ENCODE measurements at regions of chr3 and their contacts with region 1.

Region 1: DNA sequence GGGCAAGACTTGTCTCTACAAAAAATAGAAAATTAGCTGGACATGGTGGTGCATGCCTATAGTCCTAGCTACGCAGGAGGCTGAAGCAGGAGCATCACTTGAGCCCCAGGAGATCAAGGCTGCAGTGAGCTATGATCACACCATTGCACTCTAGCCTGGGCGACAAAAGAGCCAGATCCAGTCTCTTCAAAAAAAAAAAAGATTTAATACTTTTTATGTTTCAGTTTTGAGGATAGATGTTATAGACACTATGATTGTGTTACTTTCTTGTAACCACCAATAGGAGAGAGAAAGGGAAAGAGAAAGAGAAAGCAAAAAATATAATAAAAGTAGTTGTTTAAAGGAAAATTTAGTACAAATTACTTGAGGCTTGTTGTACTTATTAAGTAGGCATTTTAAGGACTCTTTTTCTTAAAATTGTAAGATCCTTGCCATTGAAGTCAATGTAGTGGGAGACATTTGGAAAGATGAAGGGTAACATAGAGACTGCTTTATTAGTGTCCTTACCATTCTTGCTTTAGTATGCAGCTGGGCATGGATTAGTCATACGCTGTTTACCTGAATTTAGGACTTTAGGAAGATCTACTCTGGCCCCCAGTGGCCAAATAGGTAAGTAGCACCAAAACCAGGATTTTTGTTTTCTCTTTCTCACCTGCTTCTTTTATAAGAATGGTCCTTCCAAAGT is 35.1 kb upstream of the ZDHHC23 start:
- DNase-seq: peak; percentile 68
- ATAC-seq: peak; percentile 93
- H3K4me3 ChIP-seq: no peak overlapping the region
- H3K27ac ChIP-seq: no peak overlapping the region
- H3K4me1 ChIP-seq: peaks cover 0 to 4% of the 10 kb centered on the region in 2 experiments; a peak in 1 of 4 replicates
- H3K27me3 ChIP-seq: no peaks in the 10 kb centered on the region
- CTCF ChIP-seq: peak; percentile 73 to 88 (median 77)
- POLR2A ChIP-seq: no peak
- RAD21 ChIP-seq: peak; percentile 92

Region 2: GRCh38 chr3:112671930-112672715 is 1240.6 kb before region 1 on chr3:
- CTCF ChIA-PET with region 1: no interaction called
- POLR2A ChIA-PET with region 1: no interaction called
- RAD21 ChIA-PET with region 1: no interaction called
- intact Hi-C with region 1: no loop called
- DNase-seq: no peak
- ATAC-seq: no peak
- H3K4me3 ChIP-seq: no peak overlapping the region
- H3K27ac ChIP-seq: no peak overlapping the region
- H3K4me1 ChIP-seq: peaks cover 6 to 28% of the 10 kb centered on the region in 2 experiments; a peak in 3 of 4 replicates
- H3K27me3 ChIP-seq: no peaks in the 10 kb centered on the region
- CTCF ChIP-seq: no peak
- POLR2A ChIP-seq: no peak
- RAD21 ChIP-seq: no peak

Region 3: DNA sequence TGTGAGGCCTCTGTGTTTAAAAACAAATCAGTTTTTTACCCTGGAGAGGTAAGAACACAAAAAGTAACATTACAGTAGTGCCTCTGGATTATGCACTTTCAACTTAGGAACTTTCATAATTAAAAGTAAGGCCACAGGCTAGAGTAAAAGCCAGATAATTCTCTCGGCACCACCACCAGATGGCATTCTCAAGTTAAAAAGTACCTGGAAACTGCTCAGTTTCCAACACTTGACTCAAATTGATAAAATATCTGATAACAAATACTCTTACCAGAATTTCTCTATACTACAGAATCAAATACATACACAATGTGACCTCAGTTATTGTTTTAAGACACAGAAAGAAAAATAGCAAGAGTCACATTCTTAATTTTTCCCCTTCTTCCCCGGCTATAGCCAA is 417.7 kb before region 1 on chr3:
- CTCF ChIA-PET with region 1: no interaction called
- POLR2A ChIA-PET with region 1: no interaction called
- RAD21 ChIA-PET with region 1: no interaction called
- intact Hi-C with region 1: loop called (anchors 10 kb)
- DNase-seq: peak; percentile 23
- ATAC-seq: peak; percentile 53; the same call in 1 of the 2 replicates
- H3K4me3 ChIP-seq: no peak overlapping the region
- H3K27ac ChIP-seq: no peak overlapping the region
- H3K4me1 ChIP-seq: no peaks in the 10 kb centered on the region
- H3K27me3 ChIP-seq: no peaks in the 10 kb centered on the region
- CTCF ChIP-seq: peak; percentile 38 to 52 (median 48); a peak in 5 of 6 replicates
- POLR2A ChIP-seq: no peak
- RAD21 ChIP-seq: peak; percentile 51

Region 4: DNA sequence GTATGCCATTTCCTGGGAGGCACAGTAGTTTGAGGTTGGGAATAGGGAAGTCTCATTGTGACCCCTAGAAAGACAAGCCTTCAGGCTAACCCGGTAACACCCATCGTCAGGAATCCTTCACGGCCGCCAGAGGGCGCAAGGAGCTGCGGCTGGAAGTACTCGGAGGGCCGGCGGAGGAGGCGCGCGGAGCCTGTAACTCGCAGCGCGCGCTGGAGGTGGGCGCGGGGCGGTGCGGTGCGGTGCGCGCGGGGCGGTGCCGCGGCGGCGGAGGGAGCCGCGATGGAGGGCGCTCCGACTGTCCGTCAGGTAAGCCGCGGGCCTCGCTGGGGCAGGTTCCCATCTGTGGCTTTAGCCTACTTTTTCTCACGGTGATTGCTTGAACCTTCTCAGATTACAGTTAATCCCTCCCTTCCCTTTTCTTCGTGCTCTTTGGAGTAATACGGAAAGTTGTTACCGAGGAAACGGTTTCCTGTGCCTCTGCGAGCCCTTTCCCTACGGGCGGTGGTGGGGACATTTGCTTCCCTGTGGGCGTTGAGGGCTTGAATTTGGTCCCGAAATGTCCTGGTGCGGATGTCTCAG is 74.0 kb before region 1 on chr3 and contains the start of gene GRAMD1C:
- CTCF ChIA-PET with region 1: interaction called, 28 read pairs
- POLR2A ChIA-PET with region 1: no interaction called
- RAD21 ChIA-PET with region 1: no interaction called
- intact Hi-C with region 1: loop called (anchors 1 kb)
- DNase-seq: peak; percentile 82
- ATAC-seq: peak; percentile 97
- H3K4me3 ChIP-seq: peak within 1 kb of the TSS; percentile 66 to 74
- H3K27ac ChIP-seq: peak within 1 kb of the TSS; percentile 21; the same call in 1 of the 2 replicates
- H3K4me1 ChIP-seq: peaks cover 0 to 15% of the 10 kb centered on the region in 2 experiments; a peak in 1 of 4 replicates
- H3K27me3 ChIP-seq: no peaks in the 10 kb centered on the region
- CTCF ChIP-seq: peak; percentile 73 to 90 (median 83)
- POLR2A ChIP-seq: no peak
- RAD21 ChIP-seq: peak; percentile 75
- total RNA-seq, gene GRAMD1C: 7.9 TPM

Region 5: GRCh38 chr3:113844622-113845222 is 68.0 kb before region 1 on chr3:
- CTCF ChIA-PET with region 1: interaction called, 28 read pairs
- POLR2A ChIA-PET with region 1: no interaction called
- RAD21 ChIA-PET with region 1: interaction called in 1 of 2 experiments, 7 read pairs
- intact Hi-C with region 1: loop called (anchors 1 kb)
- DNase-seq: no peak
- ATAC-seq: peak; percentile 72
- H3K4me3 ChIP-seq: no peak overlapping the region
- H3K27ac ChIP-seq: no peak overlapping the region
- H3K4me1 ChIP-seq: peaks cover 0 to 7% of the 10 kb centered on the region in 2 experiments; a peak in 1 of 4 replicates
- H3K27me3 ChIP-seq: no peaks in the 10 kb centered on the region
- CTCF ChIP-seq: peak; percentile 58 to 70 (median 60); a peak in 5 of 6 replicates
- POLR2A ChIP-seq: no peak
- RAD21 ChIP-seq: peak; percentile 68